ENCODE measurements at regions of chr6 and their contacts with region 1.

Region 1: DNA sequence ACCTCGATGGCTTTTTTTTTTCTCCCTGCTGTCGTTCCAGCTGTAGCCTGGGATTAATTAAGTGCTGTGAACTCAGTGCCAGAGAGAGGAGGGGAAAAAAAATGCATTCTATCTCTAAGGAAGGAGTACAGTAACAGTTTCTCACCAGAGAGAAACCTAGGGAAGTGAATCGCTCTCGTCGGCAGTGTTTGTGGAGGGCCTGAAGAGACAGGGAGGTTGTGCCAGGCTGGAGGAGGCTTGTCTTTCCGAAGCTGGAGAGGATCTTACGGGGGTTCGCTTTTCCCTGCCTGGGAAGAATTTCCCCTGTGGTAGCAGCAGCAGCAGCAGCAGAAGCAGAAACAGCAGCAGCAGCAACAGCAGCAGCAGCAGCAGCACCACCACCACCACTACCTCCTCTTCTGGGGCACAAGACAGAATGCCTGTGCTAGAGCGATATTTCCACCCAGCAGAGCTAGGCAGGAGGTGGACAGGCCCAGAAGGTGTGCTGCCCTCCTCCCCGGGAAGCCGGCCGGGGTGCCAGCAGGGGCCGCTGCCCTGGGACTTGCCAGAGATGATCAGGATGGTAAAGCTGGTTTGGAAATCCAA is 186.5 kb downstream of the PDE7B start:
- DNase-seq: no peak
- H3K4me3 ChIP-seq: peak overlapping the region; percentile 7 to 21
- H3K27ac ChIP-seq: peak overlapping the region; percentile 58 to 60
- H3K4me1 ChIP-seq: no peaks in the 10 kb centered on the region
- H3K27me3 ChIP-seq: no peaks in the 10 kb centered on the region
- CTCF ChIP-seq: no peak
- POLR2A ChIP-seq: no peak

Region 2: GRCh38 chr6:135974426-135974825 is 63.5 kb before region 1 on chr6:
- intact Hi-C with region 1: no loop called
- DNase-seq: no peak
- H3K4me3 ChIP-seq: no peak overlapping the region
- H3K27ac ChIP-seq: no peak overlapping the region
- H3K4me1 ChIP-seq: no peaks in the 10 kb centered on the region
- H3K27me3 ChIP-seq: no peaks in the 10 kb centered on the region
- CTCF ChIP-seq: no peak
- POLR2A ChIP-seq: no peak

Region 3: DNA sequence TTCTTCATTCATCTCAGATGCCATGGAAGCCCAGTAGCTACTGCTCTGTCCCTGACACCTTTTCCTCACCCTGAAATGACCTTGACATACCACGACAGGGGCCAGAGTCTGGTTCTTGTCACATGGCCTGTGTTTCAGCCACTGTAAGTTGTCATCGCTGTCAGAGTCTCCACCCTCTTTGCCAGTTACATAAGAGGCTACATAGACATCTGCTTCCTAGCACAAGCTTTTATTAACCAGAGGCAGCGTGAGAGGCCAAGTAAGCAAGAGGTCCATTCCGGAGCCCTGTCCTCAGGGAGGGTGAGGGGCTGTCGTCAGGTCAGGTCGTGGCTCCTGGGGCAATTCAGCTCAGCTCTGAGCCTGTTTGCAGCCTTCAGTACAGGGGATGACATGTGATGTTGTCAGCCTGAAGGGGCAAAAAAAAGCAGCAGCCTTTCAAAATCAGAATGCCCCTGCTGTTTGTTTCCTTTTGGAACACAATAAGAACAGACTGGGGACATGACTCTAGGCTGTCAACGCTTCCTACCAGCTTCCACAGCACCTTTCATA is 65.9 kb after region 1 on chr6:
- intact Hi-C with region 1: loop called (anchors 5 kb)
- DNase-seq: no peak
- H3K4me3 ChIP-seq: no peak overlapping the region
- H3K27ac ChIP-seq: peak overlapping the region; percentile 39 to 44
- H3K4me1 ChIP-seq: no peaks in the 10 kb centered on the region
- H3K27me3 ChIP-seq: no peaks in the 10 kb centered on the region
- CTCF ChIP-seq: no peak
- POLR2A ChIP-seq: no peak

Region 4: GRCh38 chr6:136226027-136226673 is 188.2 kb after region 1 on chr6:
- intact Hi-C with region 1: loop called (anchors 5 kb)
- DNase-seq: peak; percentile 24
- H3K4me3 ChIP-seq: no peak overlapping the region
- H3K27ac ChIP-seq: no peak overlapping the region
- H3K4me1 ChIP-seq: no peaks in the 10 kb centered on the region
- H3K27me3 ChIP-seq: no peaks in the 10 kb centered on the region
- CTCF ChIP-seq: peak; percentile 97 to 100 (median 99)
- POLR2A ChIP-seq: no peak